CD4-positive, alpha-beta T cell (primary cell): ENCODE measurements at regions of chr20 and their contacts with region 1.

Region 1: GRCh38 chr20:35954200-35954906 is at the start of gene SCAND1:
- DNase-seq: peak; percentile 94 to 99 (median 96)
- ATAC-seq: peak; percentile 82
- H3K4me3 ChIP-seq: peak within 1 kb of the TSS; percentile 96
- H3K4me3 Mint-ChIP-seq: peak within 1 kb of the TSS; percentile 99
- H3K27ac ChIP-seq: peak within 1 kb of the TSS; percentile 99
- H3K27ac Mint-ChIP-seq: peak within 1 kb of the TSS; percentile 98
- H3K4me1 ChIP-seq: peaks cover 31% of the 10 kb centered on the region
- H3K4me1 Mint-ChIP-seq: peaks cover 30% of the 10 kb centered on the region
- H3K27me3 ChIP-seq: no peaks in the 10 kb centered on the region
- H3K27me3 Mint-ChIP-seq: no peaks in the 10 kb centered on the region
- CTCF ChIP-seq: peak; percentile 100
- total RNA-seq, gene SCAND1: 77.2 to 82.7 TPM

Region 2: DNA sequence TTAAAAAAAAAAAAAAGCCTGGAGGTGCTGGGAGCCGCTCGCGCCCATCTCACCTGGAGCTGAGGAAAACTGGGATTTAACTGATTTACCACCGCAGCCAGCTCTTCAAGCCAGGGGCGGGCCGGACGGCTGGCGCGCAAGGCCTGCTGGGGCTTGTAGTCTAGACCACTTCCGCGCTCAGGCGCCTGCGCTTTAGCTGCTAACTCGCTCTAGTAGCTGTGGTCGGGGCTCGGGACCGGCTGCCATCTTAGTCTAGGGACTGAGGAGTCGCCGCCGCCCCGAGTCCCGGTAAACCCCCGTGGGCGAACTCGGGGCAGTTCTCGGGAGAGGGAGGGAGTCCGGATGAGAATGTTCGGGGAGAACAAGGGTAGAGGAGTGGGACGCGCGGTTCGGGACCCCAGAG is 1591.3 kb before region 1 on chr20 and contains the start of gene ITCH:
- CTCF ChIA-PET with region 1: no interaction called
- POLR2A ChIA-PET with region 1: interaction called, 8 read pairs
- intact Hi-C with region 1: loop called in 1 of 2 experiments (anchors 5 kb)
- DNase-seq: peak; percentile 86 to 96 (median 89)
- ATAC-seq: peak; percentile 100
- H3K4me3 ChIP-seq: peak within 1 kb of the TSS; percentile 98
- H3K4me3 Mint-ChIP-seq: peak within 1 kb of the TSS; percentile 100
- H3K27ac ChIP-seq: peak within 1 kb of the TSS; percentile 72 to 78
- H3K27ac Mint-ChIP-seq: peak within 1 kb of the TSS; percentile 95
- H3K4me1 ChIP-seq: peaks cover 47% of the 10 kb centered on the region
- H3K4me1 Mint-ChIP-seq: peaks cover 37% of the 10 kb centered on the region
- H3K27me3 ChIP-seq: no peaks in the 10 kb centered on the region
- H3K27me3 Mint-ChIP-seq: no peaks in the 10 kb centered on the region
- CTCF ChIP-seq: no peak
- total RNA-seq, gene ITCH: 44.2 to 47.0 TPM

Region 3: DNA sequence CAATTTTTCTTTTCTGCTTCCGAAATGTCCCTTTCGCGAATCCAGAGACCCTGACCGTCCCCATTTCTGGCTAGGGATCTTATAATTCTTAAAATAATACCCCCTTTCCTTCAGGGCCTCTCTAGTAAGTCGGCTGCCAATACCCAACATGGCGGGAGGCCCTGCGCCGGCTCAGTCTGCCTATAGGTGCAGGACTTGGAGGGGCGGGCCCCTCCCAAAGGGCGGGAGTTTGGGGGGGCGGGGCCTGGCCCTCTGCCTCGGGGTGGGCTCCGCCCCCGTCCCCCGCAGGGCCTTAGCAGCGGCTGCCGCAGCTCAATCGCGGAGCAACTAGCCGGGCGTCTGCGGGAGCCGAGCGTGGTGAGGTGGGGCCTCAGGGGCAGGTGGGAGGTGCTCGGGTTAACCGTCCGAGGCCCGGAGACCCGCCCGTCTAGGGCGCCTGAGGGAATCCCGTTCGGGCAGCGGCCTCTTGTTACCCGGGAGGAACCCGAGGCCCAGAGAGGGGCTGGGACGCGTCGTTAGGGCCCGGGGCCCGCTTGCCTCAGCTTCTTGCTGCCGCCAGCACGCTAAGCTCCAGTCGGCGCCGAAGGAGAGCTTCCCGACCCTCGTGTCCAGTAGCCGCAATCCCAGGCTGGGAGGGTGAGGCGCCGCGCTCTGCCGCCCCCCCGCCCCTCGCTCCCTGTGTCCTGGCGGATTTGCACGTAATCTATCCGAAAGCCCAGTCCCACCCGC is 499.3 kb before region 1 on chr20 and contains the start of gene CEP250:
- CTCF ChIA-PET with region 1: interaction called, 9 read pairs
- POLR2A ChIA-PET with region 1: interaction called, 36 read pairs
- intact Hi-C with region 1: no loop called
- DNase-seq: peak; percentile 87 to 97 (median 94)
- ATAC-seq: peak; percentile 96
- H3K4me3 ChIP-seq: peak within 1 kb of the TSS; percentile 91
- H3K4me3 Mint-ChIP-seq: peak within 1 kb of the TSS; percentile 97
- H3K27ac ChIP-seq: peak within 1 kb of the TSS; percentile 83 to 94
- H3K27ac Mint-ChIP-seq: peak within 1 kb of the TSS; percentile 87
- H3K4me1 ChIP-seq: peaks cover 19% of the 10 kb centered on the region
- H3K4me1 Mint-ChIP-seq: peaks cover 29% of the 10 kb centered on the region
- H3K27me3 ChIP-seq: no peaks in the 10 kb centered on the region
- H3K27me3 Mint-ChIP-seq: no peaks in the 10 kb centered on the region
- CTCF ChIP-seq: no peak
- total RNA-seq, gene CEP250: 27.6 to 33.1 TPM

Region 4: GRCh38 chr20:35664544-35665221 is 289.7 kb before region 1 on chr20 and contains the starts of genes CPNE1 and RBM12:
- CTCF ChIA-PET with region 1: interaction called, 4 read pairs
- POLR2A ChIA-PET with region 1: interaction called, 29 read pairs
- intact Hi-C with region 1: no loop called
- DNase-seq: peak; percentile 87 to 97 (median 92)
- ATAC-seq: peak; percentile 67
- H3K4me3 ChIP-seq: peak within 1 kb of the TSS; percentile 97
- H3K4me3 Mint-ChIP-seq: peak within 1 kb of the TSS; percentile 89
- H3K27ac ChIP-seq: peak within 1 kb of the TSS; percentile 99
- H3K27ac Mint-ChIP-seq: peak within 1 kb of the TSS; percentile 99
- H3K4me1 ChIP-seq: peaks cover 37% of the 10 kb centered on the region
- H3K4me1 Mint-ChIP-seq: peaks cover 49% of the 10 kb centered on the region
- H3K27me3 ChIP-seq: no peaks in the 10 kb centered on the region
- H3K27me3 Mint-ChIP-seq: no peaks in the 10 kb centered on the region
- CTCF ChIP-seq: no peak
- total RNA-seq, gene CPNE1: 146 to 153 TPM
- total RNA-seq, gene RBM12: 91.7 to 95.2 TPM

Region 5: DNA sequence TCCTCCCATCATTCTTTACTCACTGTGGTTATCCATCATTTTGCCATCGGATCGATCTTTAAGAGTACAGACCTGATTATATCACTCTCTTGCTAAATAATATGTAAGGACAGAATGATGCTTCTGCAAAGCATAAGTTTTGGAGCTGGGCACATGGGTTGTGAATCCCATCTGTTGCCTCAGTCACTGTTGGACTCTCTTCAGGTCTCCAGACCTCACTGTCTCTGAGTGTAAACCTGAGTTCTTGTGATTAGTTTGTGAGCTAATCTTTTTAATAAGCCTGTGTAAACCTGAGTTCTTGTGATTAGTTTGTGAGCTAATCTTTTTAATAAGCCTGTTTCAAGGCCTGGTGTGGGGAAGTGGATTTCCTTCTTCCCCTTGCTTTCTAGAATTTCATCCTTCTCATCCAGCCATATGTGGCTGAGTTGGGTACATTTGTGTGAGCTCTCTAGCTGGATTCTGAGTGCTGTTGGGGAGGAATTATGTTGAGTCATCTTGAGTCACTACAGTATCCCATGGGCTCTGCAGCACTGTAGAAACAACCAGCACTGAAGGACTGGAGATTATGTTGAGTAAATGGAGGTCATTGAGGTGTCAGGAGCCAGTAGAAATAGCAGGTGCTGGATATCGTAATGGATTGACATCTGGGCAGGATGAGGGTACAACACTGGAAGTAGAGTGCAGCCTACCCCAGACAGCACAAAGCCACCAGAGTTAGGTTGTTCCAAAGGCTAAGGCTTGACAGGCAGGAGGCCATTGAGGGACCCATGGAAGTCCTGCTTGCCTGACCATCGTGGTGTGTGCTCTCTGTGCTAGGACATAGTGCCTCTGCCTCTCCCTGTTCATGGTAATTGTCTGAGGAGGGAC is 52.4 kb before region 1 on chr20:
- CTCF ChIA-PET with region 1: no interaction called
- POLR2A ChIA-PET with region 1: no interaction called
- intact Hi-C with region 1: no loop called
- DNase-seq: no peak
- ATAC-seq: no peak
- H3K4me3 ChIP-seq: no peak overlapping the region
- H3K4me3 Mint-ChIP-seq: no peak overlapping the region
- H3K27ac ChIP-seq: no peak overlapping the region
- H3K27ac Mint-ChIP-seq: no peak overlapping the region
- H3K4me1 ChIP-seq: no peaks in the 10 kb centered on the region
- H3K4me1 Mint-ChIP-seq: peaks cover 9% of the 10 kb centered on the region
- H3K27me3 ChIP-seq: no peaks in the 10 kb centered on the region
- H3K27me3 Mint-ChIP-seq: no peaks in the 10 kb centered on the region
- CTCF ChIP-seq: no peak

Region 6: DNA sequence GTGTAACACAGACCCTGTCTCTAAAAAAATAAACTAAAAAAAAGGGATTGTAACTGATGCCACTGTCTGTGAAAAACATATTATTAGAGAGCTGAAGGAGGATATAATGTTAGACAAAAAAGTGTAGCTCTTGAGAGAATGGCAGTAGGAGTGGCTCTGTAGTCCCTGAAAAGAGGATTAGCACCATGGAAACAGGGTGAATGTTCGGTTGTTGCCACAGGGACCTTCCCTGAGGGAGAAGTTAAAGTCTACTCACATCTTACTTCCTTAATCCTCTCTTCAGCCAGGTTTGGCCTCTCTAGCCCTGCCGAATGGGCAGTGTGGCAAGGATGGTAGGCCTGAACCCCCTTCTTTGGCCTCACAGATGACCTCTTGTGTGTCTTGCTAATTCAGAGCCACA is 12.1 kb before region 1 on chr20:
- CTCF ChIA-PET with region 1: interaction called, 13 read pairs
- POLR2A ChIA-PET with region 1: interaction called, 19 read pairs
- intact Hi-C with region 1: no loop called
- DNase-seq: no peak
- ATAC-seq: no peak
- H3K4me3 ChIP-seq: no peak overlapping the region
- H3K4me3 Mint-ChIP-seq: no peak overlapping the region
- H3K27ac ChIP-seq: no peak overlapping the region
- H3K27ac Mint-ChIP-seq: peak overlapping the region; percentile 47
- H3K4me1 ChIP-seq: peaks cover under 1% of the 10 kb centered on the region
- H3K4me1 Mint-ChIP-seq: peaks cover 7% of the 10 kb centered on the region
- H3K27me3 ChIP-seq: no peaks in the 10 kb centered on the region
- H3K27me3 Mint-ChIP-seq: no peaks in the 10 kb centered on the region
- CTCF ChIP-seq: no peak

Region 7: GRCh38 chr20:36235892-36236785 is 281.8 kb after region 1 on chr20 and contains the start of gene AAR2:
- CTCF ChIA-PET with region 1: interaction called, 4 read pairs
- POLR2A ChIA-PET with region 1: interaction called, 20 read pairs
- intact Hi-C with region 1: no loop called
- DNase-seq: peak; percentile 65 to 85 (median 75)
- ATAC-seq: peak; percentile 96
- H3K4me3 ChIP-seq: peak within 1 kb of the TSS; percentile 98
- H3K4me3 Mint-ChIP-seq: peak within 1 kb of the TSS; percentile 95
- H3K27ac ChIP-seq: peak within 1 kb of the TSS; percentile 42 to 76
- H3K27ac Mint-ChIP-seq: peak within 1 kb of the TSS; percentile 83
- H3K4me1 ChIP-seq: peaks cover 36% of the 10 kb centered on the region
- H3K4me1 Mint-ChIP-seq: peaks cover 42% of the 10 kb centered on the region
- H3K27me3 ChIP-seq: no peaks in the 10 kb centered on the region
- H3K27me3 Mint-ChIP-seq: no peaks in the 10 kb centered on the region
- CTCF ChIP-seq: no peak
- total RNA-seq, gene AAR2: 22.5 to 24.3 TPM